WTC11 (cell line): ENCODE measurements at regions of chr7 and their contacts with region 1.

Region 1: DNA sequence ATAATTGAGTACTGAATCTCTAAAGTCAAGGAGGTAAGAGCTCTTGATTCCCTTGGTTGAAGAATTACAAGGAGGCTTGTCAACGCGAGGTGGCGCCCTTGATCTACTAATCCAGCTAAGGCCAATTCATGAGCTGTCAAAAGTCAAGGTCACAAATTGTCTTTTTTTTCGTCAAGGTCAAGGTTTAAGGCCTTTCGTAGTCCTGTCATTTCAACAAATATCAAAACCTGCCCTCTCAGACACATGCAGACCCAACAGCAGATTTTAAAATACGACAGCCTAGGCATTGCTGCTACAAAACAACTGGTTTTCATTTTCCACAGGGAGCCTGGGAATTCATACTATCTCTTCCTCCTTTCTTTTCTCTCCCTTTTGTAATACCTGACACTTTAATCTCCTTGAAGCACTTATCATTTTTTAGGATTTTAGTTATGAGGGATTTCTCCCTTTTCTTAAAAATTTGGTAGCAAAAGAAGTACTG is 3.6 kb downstream of the HOXA13 start:
- DNase-seq: peak; percentile 90
- ATAC-seq: no peak
- H3K4me3 Mint-ChIP-seq: no peak overlapping the region
- H3K27ac Mint-ChIP-seq: no peak overlapping the region
- H3K4me1 Mint-ChIP-seq: peaks cover 17% of the 10 kb centered on the region
- H3K27me3 Mint-ChIP-seq: peaks cover 96% of the 10 kb centered on the region
- CTCF ChIP-seq: peak; percentile 55

Region 2: DNA sequence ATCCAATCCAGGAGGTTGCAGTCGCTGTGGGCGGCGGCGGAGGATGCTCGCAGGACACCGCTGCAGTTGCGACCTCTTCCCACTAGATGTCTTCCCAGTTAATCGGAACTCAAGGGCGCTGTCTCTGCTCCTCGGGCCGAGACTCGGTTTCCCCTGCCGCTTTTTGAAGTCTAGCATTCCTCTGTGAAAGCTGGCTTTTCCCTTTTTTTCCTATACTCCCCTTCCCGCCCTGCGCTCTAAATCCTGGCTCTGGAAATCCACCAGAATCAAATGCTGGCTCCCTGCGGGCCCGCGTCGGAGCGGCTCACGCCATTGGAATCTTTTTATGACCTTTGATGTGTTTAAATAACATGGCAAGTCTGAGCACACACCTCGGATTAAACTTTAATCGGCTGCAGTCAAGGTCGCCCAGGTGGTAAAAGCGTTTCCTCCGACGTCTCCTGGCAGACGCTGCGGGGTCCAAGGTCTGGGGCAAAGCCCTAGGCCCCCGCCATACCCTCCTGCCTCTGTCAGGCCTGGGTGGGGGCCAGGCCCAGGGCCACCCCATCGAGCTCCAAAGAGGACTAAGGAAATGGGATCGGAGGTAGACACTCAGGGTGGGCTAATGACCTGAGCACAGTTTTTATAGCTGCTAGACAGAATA is 14.2 kb after region 1 on chr7:
- CTCF ChIA-PET with region 1: interaction called, 23 read pairs
- POLR2A ChIA-PET with region 1: no interaction called
- DNase-seq: peak; percentile 82
- ATAC-seq: peak; percentile 71
- H3K4me3 Mint-ChIP-seq: no peak overlapping the region; the same call in 1 of the 2 replicates
- H3K27ac Mint-ChIP-seq: no peak overlapping the region
- H3K4me1 Mint-ChIP-seq: peaks cover 31% of the 10 kb centered on the region
- H3K27me3 Mint-ChIP-seq: peaks cover 100% of the 10 kb centered on the region
- CTCF ChIP-seq: peak; percentile 68

Region 3: DNA sequence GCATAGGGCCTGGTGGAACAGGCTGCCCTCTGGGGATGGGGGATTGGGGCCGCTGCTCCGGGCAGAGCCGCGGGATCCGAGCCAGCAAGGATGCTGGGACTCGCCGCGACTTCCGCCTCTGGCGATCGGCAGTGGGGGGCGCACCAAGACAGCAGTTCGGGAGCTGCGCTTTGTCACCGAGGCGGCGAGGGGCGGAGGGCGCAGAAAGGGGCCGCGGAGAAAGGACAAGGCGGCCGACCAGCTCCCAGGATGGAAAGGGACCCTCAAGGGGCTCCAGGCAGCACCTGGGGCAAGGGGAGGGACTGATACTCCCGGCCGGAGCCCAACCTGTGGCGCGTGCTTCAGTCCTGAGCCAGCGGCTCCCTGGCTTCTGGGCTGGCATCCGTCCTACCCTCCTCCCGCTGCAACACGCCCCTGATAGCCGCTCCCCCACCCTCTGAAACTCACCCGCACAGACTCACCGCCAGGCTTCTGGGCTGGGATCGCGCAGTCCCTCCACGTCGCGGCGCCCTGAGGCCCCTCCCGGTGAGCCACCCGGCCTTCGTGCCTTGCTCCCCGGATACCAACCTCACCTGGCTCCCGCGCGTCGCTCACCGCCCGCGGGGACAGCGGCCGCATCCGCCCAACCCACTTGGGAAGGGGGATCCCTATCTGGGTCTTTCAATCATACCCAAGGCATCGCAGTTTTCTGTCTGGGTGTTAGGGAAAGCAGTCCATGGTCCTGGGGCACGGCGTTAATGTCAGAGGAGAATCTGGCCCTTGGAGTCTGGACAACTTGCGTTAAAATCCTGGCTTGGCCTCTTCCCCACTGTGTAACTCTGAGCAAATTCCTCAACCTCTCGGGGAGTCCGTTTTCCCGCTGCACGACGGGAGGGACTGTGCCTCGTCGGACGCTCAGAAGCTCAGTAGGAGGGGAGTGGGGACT is 39.3 kb after region 1 on chr7:
- CTCF ChIA-PET with region 1: interaction called, 22 read pairs
- POLR2A ChIA-PET with region 1: no interaction called
- DNase-seq: peak; percentile 84
- ATAC-seq: peak; percentile 80
- H3K4me3 Mint-ChIP-seq: peak overlapping the region; percentile 69
- H3K27ac Mint-ChIP-seq: no peak overlapping the region
- H3K4me1 Mint-ChIP-seq: peaks cover 22% of the 10 kb centered on the region
- H3K27me3 Mint-ChIP-seq: peaks cover 98% of the 10 kb centered on the region
- CTCF ChIP-seq: no peak

Region 4: DNA sequence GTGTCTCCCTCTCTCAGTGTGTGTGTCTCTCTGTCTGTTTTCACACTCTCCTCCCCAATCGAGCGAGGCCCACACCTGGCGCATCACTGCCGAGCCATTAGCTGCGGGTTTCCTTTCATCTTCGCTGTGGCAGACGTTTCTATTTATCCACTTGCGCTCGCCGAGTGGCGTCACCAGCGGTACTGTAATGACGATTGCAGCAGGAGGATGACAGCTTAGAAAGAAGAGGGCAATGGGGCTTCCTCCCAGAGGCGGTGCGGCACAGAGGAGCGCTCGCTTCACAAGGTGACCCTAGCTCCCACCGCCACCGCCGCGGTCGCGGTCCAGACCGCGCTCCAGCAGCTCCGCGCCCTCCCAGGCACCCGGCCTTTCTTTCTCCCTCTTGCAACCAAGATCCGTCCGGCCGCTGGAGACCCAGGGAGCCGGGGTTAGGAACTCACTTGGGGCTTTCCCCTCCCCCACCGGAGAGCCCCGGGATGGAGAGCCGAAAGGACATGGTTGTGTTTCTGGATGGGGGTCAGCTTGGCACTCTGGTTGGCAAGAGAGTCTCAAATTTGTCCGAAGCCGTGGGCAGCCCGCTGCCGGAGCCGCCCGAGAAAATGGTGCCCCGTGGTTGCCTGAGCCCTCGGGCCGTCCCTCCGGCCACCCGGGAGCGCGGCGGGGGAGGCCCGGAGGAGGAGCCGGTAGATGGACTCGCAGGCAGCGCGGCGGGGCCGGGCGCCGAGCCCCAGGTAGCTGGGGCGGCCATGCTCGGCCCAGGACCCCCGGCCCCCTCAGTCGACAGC is 46.4 kb after region 1 on chr7 and contains the start of gene EVX1:
- CTCF ChIA-PET with region 1: interaction called, 19 read pairs
- POLR2A ChIA-PET with region 1: no interaction called
- DNase-seq: no peak
- ATAC-seq: no peak
- H3K4me3 Mint-ChIP-seq: peak within 1 kb of the TSS; percentile 71
- H3K27ac Mint-ChIP-seq: no peak within 1 kb of the TSS
- H3K4me1 Mint-ChIP-seq: peaks cover 57% of the 10 kb centered on the region
- H3K27me3 Mint-ChIP-seq: peaks cover 100% of the 10 kb centered on the region
- CTCF ChIP-seq: no peak
- total RNA-seq, gene EVX1: not detected in 3 replicates

Region 5: DNA sequence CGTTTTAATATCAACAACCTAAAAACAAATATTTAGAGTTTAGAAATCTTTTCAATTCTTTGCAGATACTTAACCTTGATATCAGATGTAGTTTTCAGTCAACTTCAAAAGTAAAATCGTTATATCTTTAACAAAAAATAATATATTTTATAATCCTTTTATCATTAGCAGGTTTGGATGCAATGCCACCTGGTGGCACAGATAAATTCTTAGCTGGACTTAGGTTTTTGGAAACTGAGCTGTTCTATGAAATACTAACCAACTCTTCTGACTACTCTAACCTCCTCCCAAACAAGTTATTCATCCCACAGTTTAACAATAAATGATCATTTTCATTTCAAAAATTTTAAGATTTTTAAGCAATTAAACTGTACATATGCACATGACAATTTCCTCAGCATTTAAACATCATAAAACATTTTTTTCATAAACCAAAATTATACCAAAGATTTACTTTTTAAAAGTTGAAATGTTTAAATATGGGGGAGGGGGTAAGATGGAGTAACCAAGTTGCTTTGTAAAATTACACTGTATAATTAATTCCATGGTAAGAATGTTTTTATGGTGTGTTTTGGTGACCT is 409.5 kb after region 1 on chr7:
- CTCF ChIA-PET with region 1: interaction called, 32 read pairs
- POLR2A ChIA-PET with region 1: no interaction called
- DNase-seq: no peak
- ATAC-seq: no peak
- H3K4me3 Mint-ChIP-seq: no peak overlapping the region
- H3K27ac Mint-ChIP-seq: no peak overlapping the region
- H3K4me1 Mint-ChIP-seq: peaks cover 65% of the 10 kb centered on the region
- H3K27me3 Mint-ChIP-seq: no peaks in the 10 kb centered on the region
- CTCF ChIP-seq: no peak

Region 6: DNA sequence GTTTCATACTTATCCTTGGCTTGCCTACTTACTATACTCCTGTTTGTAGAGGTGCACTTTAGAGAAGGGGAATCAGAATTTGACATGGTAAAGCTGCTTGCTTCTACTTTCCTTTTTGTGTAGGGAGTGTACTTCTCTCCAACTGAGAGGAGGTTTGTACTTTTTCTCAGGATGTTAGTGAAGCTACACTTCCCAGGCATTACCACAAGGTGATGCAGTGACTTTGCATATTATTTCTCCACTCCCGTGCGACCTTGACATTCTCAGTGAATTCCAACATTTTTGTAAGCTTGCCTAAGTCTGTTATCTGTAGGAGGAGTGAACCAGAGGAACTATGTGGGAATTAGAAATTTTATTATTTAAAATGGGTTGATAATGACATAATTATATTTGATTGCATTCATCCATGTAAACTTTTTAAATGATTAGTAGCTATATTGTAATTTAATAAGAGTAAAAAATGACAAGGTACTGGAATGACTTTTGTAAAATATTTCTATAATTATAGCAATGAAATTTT is 548.8 kb after region 1 on chr7:
- CTCF ChIA-PET with region 1: interaction called, 11 read pairs
- POLR2A ChIA-PET with region 1: no interaction called
- DNase-seq: no peak
- ATAC-seq: peak; percentile 67
- H3K4me3 Mint-ChIP-seq: no peak overlapping the region
- H3K27ac Mint-ChIP-seq: peak overlapping the region; percentile 94
- H3K4me1 Mint-ChIP-seq: peaks cover 38% of the 10 kb centered on the region
- H3K27me3 Mint-ChIP-seq: no peaks in the 10 kb centered on the region
- CTCF ChIP-seq: 0 out of 2 replicates have a peak, but pooled peaks have one; percentile 12

Region 7: DNA sequence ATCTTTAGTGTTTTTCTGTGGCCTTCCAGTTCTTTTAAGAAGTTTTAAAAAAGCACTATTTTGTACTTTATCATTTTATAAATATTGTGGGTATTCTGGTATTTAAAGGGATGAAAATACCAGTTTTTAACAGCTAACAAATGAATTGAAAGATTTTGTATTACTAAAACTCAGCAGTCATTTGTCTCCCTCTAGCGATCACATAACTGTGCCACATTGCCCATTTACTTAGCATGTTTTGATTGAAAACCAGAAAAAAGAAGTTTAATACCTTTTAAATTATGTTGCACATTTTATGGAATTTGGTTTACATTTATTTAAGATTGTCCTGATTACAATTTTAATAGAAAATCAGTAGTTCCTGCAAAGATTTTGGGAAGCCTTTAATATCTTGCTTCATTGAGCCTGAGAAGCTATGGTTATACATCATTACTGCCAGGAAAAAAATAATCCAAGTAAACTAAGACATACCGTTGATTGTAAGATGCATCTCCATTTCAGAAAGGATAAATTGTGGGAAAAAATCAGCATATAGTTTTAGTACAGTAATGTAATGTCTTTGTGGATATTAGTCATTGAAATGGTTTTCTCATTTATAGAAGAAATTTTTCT is 578.5 kb after region 1 on chr7:
- CTCF ChIA-PET with region 1: interaction called, 14 read pairs
- POLR2A ChIA-PET with region 1: no interaction called
- DNase-seq: no peak
- ATAC-seq: no peak
- H3K4me3 Mint-ChIP-seq: no peak overlapping the region
- H3K27ac Mint-ChIP-seq: no peak overlapping the region
- H3K4me1 Mint-ChIP-seq: peaks cover 8% of the 10 kb centered on the region
- H3K27me3 Mint-ChIP-seq: no peaks in the 10 kb centered on the region
- CTCF ChIP-seq: no peak